ENCODE measurements at regions of chr1 and their contacts with region 1.

Region 1: GRCh38 chr1:244603498-244603897 is 49.4 kb upstream of the DESI2 start:
- DNase-seq: peak; percentile 43
- H3K4me3 ChIP-seq: no peak overlapping the region
- H3K27ac ChIP-seq: no peak overlapping the region
- H3K4me1 ChIP-seq: peaks cover 0 to 4% of the 10 kb centered on the region in 2 experiments; a peak in 1 of 4 replicates
- H3K27me3 ChIP-seq: no peaks in the 10 kb centered on the region
- CTCF ChIP-seq: peak; percentile 88
- EP300 ChIP-seq: no peak
- RAD21 ChIP-seq: peak; percentile 88

Region 2: DNA sequence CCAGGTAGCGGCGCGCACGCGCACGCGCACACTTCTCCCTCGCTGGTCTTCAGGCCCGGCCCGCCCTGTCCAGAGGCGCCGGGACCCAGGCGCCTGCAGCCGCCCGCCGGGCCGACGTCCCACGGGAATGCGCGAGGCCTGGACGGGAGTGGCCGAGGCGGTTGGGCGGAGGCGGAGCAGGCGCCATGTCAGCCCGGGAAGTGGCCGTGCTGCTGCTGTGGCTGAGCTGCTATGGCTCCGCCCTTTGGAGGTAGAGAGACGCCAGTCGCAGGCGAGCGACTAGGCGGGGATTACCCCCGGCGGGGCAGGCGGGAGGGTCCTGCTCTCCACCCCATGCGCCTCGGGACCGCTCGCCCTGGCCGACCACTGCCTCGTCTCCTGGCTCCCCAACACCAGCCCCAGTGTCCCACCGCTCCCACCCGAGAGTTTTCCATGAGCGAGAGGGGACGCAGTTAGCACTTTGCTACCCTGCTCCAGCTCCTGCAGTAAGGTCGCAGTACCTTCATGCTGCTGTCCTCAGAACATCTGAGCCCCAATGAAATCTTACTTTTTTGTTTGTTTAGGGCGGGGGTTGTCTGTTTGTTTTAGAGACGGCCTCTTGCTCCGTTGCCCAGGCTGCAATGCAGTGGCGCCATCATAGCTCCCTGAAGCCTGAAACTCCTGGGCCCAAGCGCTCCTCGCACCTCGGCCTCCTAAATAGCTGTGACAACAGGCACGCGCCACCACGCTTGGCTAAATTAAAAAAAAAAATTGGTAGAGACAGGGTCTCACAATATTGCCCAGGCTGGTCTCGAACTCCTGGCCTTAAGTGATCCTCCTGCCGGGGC is 142.0 kb before region 1 on chr1 and contains the start of gene CATSPERE:
- CTCF ChIA-PET with region 1: no interaction called
- POLR2A ChIA-PET with region 1: no interaction called
- DNase-seq: peak; percentile 94
- H3K4me3 ChIP-seq: peak within 1 kb of the TSS; percentile 42
- H3K27ac ChIP-seq: peak within 1 kb of the TSS in 1 of 2 experiments; percentile 76; a peak in 2 of 4 replicates
- H3K4me1 ChIP-seq: peaks cover 0 to 11% of the 10 kb centered on the region in 2 experiments; a peak in 3 of 4 replicates
- H3K27me3 ChIP-seq: no peaks in the 10 kb centered on the region
- CTCF ChIP-seq: no peak
- EP300 ChIP-seq: no peak
- RAD21 ChIP-seq: no peak
- polyA plus RNA-seq, gene CATSPERE: 0.30 and 0.54 TPM in 2 replicates

Region 3: GRCh38 chr1:244545511-244545910 is 58.0 kb before region 1 on chr1:
- CTCF ChIA-PET with region 1: no interaction called
- POLR2A ChIA-PET with region 1: no interaction called
- DNase-seq: no peak
- H3K4me3 ChIP-seq: no peak overlapping the region
- H3K27ac ChIP-seq: no peak overlapping the region
- H3K4me1 ChIP-seq: no peaks in the 10 kb centered on the region
- H3K27me3 ChIP-seq: no peaks in the 10 kb centered on the region
- CTCF ChIP-seq: no peak
- EP300 ChIP-seq: no peak
- RAD21 ChIP-seq: no peak

Region 4: GRCh38 chr1:244614113-244614836 is 10.8 kb after region 1 on chr1:
- CTCF ChIA-PET with region 1: interaction called, 24 read pairs
- POLR2A ChIA-PET with region 1: interaction called, 4 read pairs
- DNase-seq: no peak
- H3K4me3 ChIP-seq: no peak overlapping the region
- H3K27ac ChIP-seq: no peak overlapping the region
- H3K4me1 ChIP-seq: no peaks in the 10 kb centered on the region
- H3K27me3 ChIP-seq: no peaks in the 10 kb centered on the region
- CTCF ChIP-seq: no peak
- EP300 ChIP-seq: no peak
- RAD21 ChIP-seq: no peak

Region 5: DNA sequence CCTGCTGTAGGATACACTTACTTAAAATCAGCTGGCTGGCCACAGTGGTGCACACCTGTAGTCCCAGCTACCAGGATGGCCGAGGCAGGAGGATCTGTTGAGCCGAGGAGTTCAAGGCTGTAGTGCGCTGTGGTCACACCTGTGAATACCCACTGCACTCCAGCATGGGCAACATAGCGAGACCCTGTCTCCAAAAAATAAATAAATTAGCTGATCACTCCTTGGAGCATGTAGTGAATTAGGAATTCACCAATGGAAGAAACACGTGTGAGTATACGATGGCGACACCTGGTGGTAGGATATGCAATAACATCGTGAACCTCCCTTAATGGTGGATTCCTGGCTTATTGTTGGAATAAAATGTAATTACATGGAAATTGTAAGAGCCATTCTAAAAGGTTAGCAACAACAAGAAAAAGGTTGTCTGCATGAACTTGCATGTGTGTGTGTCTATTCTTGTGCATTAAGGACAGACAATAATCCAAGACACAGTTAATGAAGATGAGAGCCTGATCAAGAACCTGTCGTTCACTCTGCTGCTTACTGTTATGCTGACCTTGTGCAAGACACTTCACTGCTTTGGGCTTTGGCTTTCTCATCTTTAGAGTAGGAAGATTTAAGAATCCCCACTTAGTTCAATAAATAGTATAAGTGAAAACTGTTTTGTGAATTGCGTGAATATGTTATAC is 193.4 kb after region 1 on chr1:
- CTCF ChIA-PET with region 1: interaction called, 127 read pairs
- POLR2A ChIA-PET with region 1: interaction called, 5 read pairs
- DNase-seq: peak; percentile 69
- H3K4me3 ChIP-seq: no peak overlapping the region; a peak in 1 of 4 replicates
- H3K27ac ChIP-seq: no peak overlapping the region
- H3K4me1 ChIP-seq: no peaks in the 10 kb centered on the region
- H3K27me3 ChIP-seq: no peaks in the 10 kb centered on the region
- CTCF ChIP-seq: peak; percentile 88
- EP300 ChIP-seq: no peak
- RAD21 ChIP-seq: peak; percentile 92

Measured in SK-N-SH (cell line).